Activated B cell treated with CpG ODN at 0.5 μM for 24 hours (primary cell): ENCODE measurements at regions of chr2 and their contacts with region 1.

Region 1: GRCh38 chr2:121596221-121597080 is 52.8 kb downstream of the CLASP1 start:
- DNase-seq: no peak
- ATAC-seq: peak; percentile 94
- H3K4me3 Mint-ChIP-seq: peak overlapping the region; percentile 74
- H3K27ac Mint-ChIP-seq: peak overlapping the region; percentile 87
- H3K4me1 Mint-ChIP-seq: peaks cover 48% of the 10 kb centered on the region
- H3K27me3 Mint-ChIP-seq: no peaks in the 10 kb centered on the region
- CTCF ChIP-seq: no peak

Region 2: GRCh38 chr2:121561617-121562268 is 34.7 kb before region 1 on chr2:
- CTCF ChIA-PET with region 1: no interaction called
- POLR2A ChIA-PET with region 1: interaction called, 3 read pairs
- intact Hi-C with region 1: loop called (anchors 5 kb)
- DNase-seq: no peak
- ATAC-seq: no peak
- H3K4me3 Mint-ChIP-seq: no peak overlapping the region
- H3K27ac Mint-ChIP-seq: no peak overlapping the region
- H3K4me1 Mint-ChIP-seq: peaks cover 15% of the 10 kb centered on the region
- H3K27me3 Mint-ChIP-seq: no peaks in the 10 kb centered on the region
- CTCF ChIP-seq: no peak

Region 3: DNA sequence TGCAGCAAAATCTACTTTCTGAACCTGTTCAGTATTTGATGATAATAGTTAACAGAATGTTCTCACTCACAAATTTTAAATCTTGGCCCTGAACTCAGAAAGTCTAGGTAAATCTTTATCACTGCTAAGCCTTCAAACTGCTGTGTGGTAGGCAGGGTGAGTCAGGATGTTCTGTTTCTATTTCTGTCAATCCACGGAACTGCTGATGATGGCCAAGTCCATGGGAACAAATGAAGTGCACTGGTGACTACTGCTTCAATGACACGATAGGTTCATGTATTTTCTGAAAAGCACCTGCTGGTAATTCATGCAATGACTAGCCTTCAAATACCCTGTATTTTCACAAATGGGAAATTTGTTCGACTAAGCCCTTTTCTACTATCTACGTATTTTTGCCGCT is 126.0 kb after region 1 on chr2:
- CTCF ChIA-PET with region 1: interaction called, 4 read pairs
- POLR2A ChIA-PET with region 1: no interaction called
- intact Hi-C with region 1: loop called (anchors 1 kb)
- DNase-seq: no peak
- ATAC-seq: no peak
- H3K4me3 Mint-ChIP-seq: no peak overlapping the region
- H3K27ac Mint-ChIP-seq: no peak overlapping the region
- H3K4me1 Mint-ChIP-seq: peaks cover 3% of the 10 kb centered on the region
- H3K27me3 Mint-ChIP-seq: no peaks in the 10 kb centered on the region
- CTCF ChIP-seq: no peak

Region 4: GRCh38 chr2:121736462-121737341 is 140.3 kb after region 1 on chr2 and contains the start of gene NIFK:
- CTCF ChIA-PET with region 1: no interaction called
- POLR2A ChIA-PET with region 1: interaction called, 6 read pairs
- intact Hi-C with region 1: loop called (anchors 1 kb)
- DNase-seq: peak; percentile 99
- ATAC-seq: peak; percentile 93
- H3K4me3 Mint-ChIP-seq: peak within 1 kb of the TSS; percentile 97
- H3K27ac Mint-ChIP-seq: peak within 1 kb of the TSS; percentile 97
- H3K4me1 Mint-ChIP-seq: peaks cover 20% of the 10 kb centered on the region
- H3K27me3 Mint-ChIP-seq: no peaks in the 10 kb centered on the region
- CTCF ChIP-seq: no peak
- total RNA-seq, gene NIFK: 86.4 and 102 TPM in 2 replicates

Region 5: GRCh38 chr2:121755236-121756111 is 159.0 kb after region 1 on chr2 and contains the start of gene TSN:
- CTCF ChIA-PET with region 1: no interaction called
- POLR2A ChIA-PET with region 1: interaction called, 8 read pairs
- intact Hi-C with region 1: loop called (anchors 1 kb)
- DNase-seq: peak; percentile 96
- ATAC-seq: peak; percentile 99
- H3K4me3 Mint-ChIP-seq: peak within 1 kb of the TSS; percentile 93
- H3K27ac Mint-ChIP-seq: peak within 1 kb of the TSS; percentile 80
- H3K4me1 Mint-ChIP-seq: peaks cover 34% of the 10 kb centered on the region
- H3K27me3 Mint-ChIP-seq: no peaks in the 10 kb centered on the region
- CTCF ChIP-seq: no peak
- total RNA-seq, gene TSN: 60.8 and 61.3 TPM in 2 replicates

Region 6: DNA sequence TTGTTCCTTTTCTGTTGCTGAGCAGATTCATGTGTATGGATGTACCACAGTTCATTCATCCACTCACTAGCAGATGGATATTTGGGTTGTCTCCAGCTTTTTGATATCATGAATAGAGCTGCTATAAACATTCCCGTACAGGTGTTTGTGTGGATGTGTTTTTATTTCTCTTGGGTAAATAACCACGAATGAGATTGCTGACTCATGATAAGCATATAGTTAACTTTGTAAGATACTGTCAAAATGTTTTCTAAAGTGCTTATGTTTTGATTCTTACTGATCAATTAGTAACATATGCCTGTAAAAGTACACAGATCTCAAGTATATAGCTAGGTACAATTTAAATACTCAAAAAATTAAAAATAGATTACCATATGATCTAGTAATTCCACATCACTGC is 186.7 kb after region 1 on chr2:
- CTCF ChIA-PET with region 1: no interaction called
- POLR2A ChIA-PET with region 1: no interaction called
- intact Hi-C with region 1: no loop called
- DNase-seq: no peak
- ATAC-seq: no peak
- H3K4me3 Mint-ChIP-seq: no peak overlapping the region
- H3K27ac Mint-ChIP-seq: no peak overlapping the region
- H3K4me1 Mint-ChIP-seq: no peaks in the 10 kb centered on the region
- H3K27me3 Mint-ChIP-seq: peaks cover 5% of the 10 kb centered on the region
- CTCF ChIP-seq: no peak